ENCODE measurements at regions of chr4 and their contacts with region 1.

Region 1: GRCh38 chr4:102344954-102345794 is at the start of gene SLC39A8:
- DNase-seq: peak; percentile 95
- ATAC-seq: peak; percentile 83
- H3K4me3 Mint-ChIP-seq: peak within 1 kb of the TSS; percentile 86
- H3K27ac Mint-ChIP-seq: peak within 1 kb of the TSS; percentile 99
- H3K4me1 Mint-ChIP-seq: peaks cover 42% of the 10 kb centered on the region
- H3K27me3 Mint-ChIP-seq: no peaks in the 10 kb centered on the region
- total RNA-seq, gene SLC39A8: 46.9 to 53.5 TPM

Region 2: DNA sequence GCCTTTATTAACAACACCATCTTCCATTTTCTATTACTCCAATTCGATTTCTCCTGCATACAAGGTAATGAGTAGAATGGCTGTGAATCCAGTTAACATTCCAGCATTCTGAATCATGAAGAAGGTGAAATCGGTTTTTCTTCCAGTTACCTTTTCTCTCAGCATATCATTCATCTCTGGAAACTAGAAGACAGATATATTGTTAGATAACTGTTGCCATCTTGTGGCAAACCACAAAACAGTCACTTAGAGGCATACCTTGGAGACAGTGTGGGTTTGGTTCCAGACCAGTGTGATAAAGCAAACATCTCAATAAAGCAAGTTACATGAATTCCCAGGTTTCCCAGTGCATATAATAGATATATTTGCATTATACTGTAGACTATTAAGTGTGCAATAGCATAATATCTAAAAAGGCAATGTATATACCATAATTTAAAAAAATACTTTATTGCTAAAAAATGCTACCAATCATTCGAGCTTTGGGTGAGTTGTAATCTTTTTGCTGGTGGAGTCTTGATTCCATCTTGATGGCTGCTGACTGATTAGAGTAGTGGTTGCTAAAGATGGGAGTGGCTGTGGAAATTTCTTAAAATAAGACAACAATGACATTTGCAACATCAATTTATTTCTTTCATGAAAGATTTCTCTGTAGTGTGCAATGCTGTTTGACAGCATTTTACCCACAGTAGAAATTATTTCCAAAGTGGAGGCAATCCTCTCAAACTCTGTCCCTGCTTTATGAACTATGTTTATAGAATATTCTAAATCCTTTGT is 82.0 kb before region 1 on chr4:
- CTCF ChIA-PET with region 1: interaction called, 4 read pairs
- POLR2A ChIA-PET with region 1: no interaction called
- intact Hi-C with region 1: loop called in 1 of 2 experiments (anchors 2 kb)
- DNase-seq: peak; percentile 20
- ATAC-seq: peak; percentile 88
- H3K4me3 Mint-ChIP-seq: no peak overlapping the region
- H3K27ac Mint-ChIP-seq: no peak overlapping the region
- H3K4me1 Mint-ChIP-seq: peaks cover 10% of the 10 kb centered on the region
- H3K27me3 Mint-ChIP-seq: no peaks in the 10 kb centered on the region

Region 3: DNA sequence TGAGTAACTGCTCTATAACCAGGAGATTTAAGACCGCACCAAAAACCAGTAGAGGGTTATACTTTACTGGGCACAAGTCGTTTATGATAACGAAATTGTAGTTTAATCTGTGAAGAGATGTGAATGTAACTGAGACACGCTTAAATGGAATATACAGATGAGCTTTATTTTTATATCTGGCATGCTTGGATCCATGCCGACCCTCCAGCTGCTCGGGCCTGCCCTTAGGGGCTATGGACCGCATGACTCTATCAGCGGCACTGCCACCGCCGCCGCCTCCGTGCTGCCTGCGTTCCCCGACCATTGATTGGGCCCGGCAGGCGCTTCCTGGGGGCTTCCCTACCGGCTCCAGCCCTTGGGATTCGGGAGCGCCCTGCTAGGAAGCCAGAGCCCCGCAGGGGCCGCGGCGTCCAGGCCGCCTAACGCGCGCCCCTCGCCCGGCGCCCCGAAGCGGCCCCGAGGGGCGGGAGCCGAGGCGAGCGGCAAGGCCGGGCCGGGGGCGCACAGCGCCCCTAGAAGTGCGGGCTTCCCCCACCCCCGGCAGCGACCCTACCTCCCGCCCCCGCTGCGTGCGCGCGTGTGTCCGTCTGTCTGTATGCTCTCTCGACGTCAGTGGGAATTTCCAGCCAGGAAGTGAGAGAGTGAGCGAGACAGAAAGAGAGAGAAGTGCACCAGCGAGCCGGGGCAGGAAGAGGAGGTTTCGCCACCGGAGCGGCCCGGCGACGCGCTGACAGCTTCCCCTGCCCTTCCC is 155.7 kb after region 1 on chr4 and contains the start of gene NFKB1:
- CTCF ChIA-PET with region 1: interaction called, 3 read pairs
- POLR2A ChIA-PET with region 1: no interaction called
- intact Hi-C with region 1: loop called in 1 of 2 experiments (anchors 1 kb)
- DNase-seq: peak; percentile 88
- ATAC-seq: peak; percentile 72
- H3K4me3 Mint-ChIP-seq: peak within 1 kb of the TSS; percentile 97
- H3K27ac Mint-ChIP-seq: peak within 1 kb of the TSS; percentile 96
- H3K4me1 Mint-ChIP-seq: peaks cover 26% of the 10 kb centered on the region
- H3K27me3 Mint-ChIP-seq: no peaks in the 10 kb centered on the region
- total RNA-seq, gene NFKB1: 167 to 174 TPM

Region 4: DNA sequence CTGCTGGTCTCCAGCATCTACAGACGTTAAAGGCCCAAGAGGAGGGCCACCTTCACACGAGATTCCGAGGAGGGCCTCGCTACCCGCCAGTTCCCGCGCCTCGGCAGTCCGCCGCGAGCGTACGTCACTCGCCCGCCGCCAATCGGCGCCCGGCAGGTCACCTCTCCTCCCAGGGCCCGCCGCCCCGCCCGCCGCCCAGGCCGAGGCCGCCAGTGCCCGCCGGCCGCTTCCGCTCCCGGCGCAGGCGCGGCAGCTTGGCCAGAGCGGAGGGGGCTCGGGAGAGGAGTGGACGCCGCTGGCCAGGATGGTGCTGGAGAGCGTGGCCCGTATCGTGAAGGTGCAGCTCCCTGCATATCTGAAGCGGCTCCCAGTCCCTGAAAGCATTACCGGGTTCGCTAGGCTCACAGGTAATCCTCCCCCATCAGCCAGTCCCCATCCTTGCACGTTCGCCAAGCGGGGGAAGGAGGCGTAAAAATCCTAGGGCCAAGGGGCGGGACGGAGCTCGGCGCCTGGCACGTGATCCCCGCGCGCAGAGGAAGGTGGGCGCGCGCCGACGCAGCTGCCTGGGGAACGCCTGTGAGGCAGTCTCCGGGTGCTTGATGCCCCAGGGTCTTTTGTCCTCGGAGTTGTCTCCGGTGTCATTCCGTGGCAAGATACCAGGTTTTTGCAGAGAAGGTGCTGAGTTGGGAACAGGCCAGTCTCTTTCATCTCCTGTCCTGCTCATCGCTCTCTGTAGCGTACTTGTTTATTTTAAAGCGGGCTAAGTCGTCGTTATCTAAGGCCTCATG is 523.8 kb after region 1 on chr4 and contains the start of gene CISD2:
- CTCF ChIA-PET with region 1: no interaction called
- POLR2A ChIA-PET with region 1: no interaction called
- intact Hi-C with region 1: loop called in 1 of 2 experiments (anchors 1 kb)
- DNase-seq: peak; percentile 96
- ATAC-seq: peak; percentile 88
- H3K4me3 Mint-ChIP-seq: peak within 1 kb of the TSS; percentile 95
- H3K27ac Mint-ChIP-seq: peak within 1 kb of the TSS; percentile 99
- H3K4me1 Mint-ChIP-seq: peaks cover 53% of the 10 kb centered on the region
- H3K27me3 Mint-ChIP-seq: no peaks in the 10 kb centered on the region
- total RNA-seq, gene CISD2: 33.5 to 35.1 TPM

Region 5: GRCh38 chr4:103019308-103020124 is 674.3 kb after region 1 on chr4 and contains the start of gene SLC9B1:
- CTCF ChIA-PET with region 1: no interaction called
- POLR2A ChIA-PET with region 1: no interaction called
- intact Hi-C with region 1: loop called (anchors 1 to 10 kb)
- DNase-seq: peak; percentile 97
- ATAC-seq: peak; percentile 98
- H3K4me3 Mint-ChIP-seq: peak within 1 kb of the TSS; percentile 86
- H3K27ac Mint-ChIP-seq: peak within 1 kb of the TSS; percentile 97
- H3K4me1 Mint-ChIP-seq: peaks cover 19% of the 10 kb centered on the region
- H3K27me3 Mint-ChIP-seq: no peaks in the 10 kb centered on the region
- total RNA-seq, gene SLC9B1: 1.8 to 3.7 TPM

Region 6: GRCh38 chr4:103099691-103100392 is 754.7 kb after region 1 on chr4 and contains the start of gene BDH2:
- CTCF ChIA-PET with region 1: no interaction called
- POLR2A ChIA-PET with region 1: no interaction called
- intact Hi-C with region 1: loop called (anchors 1 to 2 kb)
- DNase-seq: peak; percentile 55
- ATAC-seq: peak; percentile 98
- H3K4me3 Mint-ChIP-seq: peak within 1 kb of the TSS; percentile 74
- H3K27ac Mint-ChIP-seq: peak within 1 kb of the TSS; percentile 85
- H3K4me1 Mint-ChIP-seq: peaks cover 18% of the 10 kb centered on the region
- H3K27me3 Mint-ChIP-seq: no peaks in the 10 kb centered on the region
- total RNA-seq, gene BDH2: 12.7 to 14.8 TPM

Region 7: DNA sequence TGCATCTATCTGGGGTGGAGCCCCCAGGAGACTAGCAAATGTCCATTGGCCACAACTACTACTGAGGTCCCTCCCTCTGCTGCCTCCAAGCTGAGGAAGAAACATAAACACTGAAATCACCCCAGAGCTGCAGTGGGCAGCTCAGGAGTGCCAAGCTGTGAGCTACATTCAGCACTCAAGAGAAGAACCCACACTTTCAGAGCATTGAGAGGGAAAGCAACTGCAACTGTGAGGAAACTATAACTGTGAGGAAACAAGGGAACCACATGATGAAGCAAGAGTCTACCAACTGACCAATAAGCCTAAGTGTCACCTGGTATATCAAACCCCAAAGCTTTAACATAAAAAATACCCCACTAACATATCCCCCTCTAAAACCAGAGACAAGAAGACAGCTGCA is 1748.1 kb after region 1 on chr4:
- CTCF ChIA-PET with region 1: no interaction called
- POLR2A ChIA-PET with region 1: no interaction called
- intact Hi-C with region 1: no loop called
- DNase-seq: no peak
- ATAC-seq: no peak
- H3K4me3 Mint-ChIP-seq: no peak overlapping the region
- H3K27ac Mint-ChIP-seq: no peak overlapping the region
- H3K4me1 Mint-ChIP-seq: no peaks in the 10 kb centered on the region
- H3K27me3 Mint-ChIP-seq: no peaks in the 10 kb centered on the region

Measured in activated CD4-positive, alpha-beta T cell treated with anti-CD3 and anti-CD28 coated beads for 36 hours (primary cell).